IMR-90 (cell line): ENCODE measurements at regions of chrX and their contacts with region 1.

Region 1: DNA sequence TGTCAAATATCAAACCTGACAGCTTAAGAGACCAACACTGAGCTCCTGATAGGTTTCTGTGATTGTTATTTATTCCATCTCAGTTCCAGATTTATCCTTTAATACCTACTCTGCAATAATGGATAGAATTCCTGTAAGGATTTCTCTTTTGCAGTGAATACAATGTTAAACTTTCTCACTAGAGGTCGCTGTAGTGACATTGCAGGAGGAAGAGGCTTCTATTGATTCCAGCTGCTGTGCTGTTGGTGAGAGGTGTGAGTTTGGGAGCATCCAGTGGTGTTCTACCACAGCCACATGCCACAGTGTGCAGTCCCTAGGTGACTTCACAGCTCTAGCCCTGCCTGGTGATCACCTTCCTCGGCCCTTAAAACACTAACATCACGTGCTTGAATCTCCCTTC is 34.6 kb upstream of the DCAF8L2 start:
- DNase-seq: peak; percentile 40
- ATAC-seq: peak; percentile 63
- H3K4me3 ChIP-seq: no peak overlapping the region
- H3K27ac ChIP-seq: no peak overlapping the region
- H3K4me1 ChIP-seq: no peaks in the 10 kb centered on the region
- H3K27me3 ChIP-seq: no peaks in the 10 kb centered on the region
- CTCF ChIP-seq: peak; percentile 45
- POLR2A ChIP-seq: no peak
- RAD21 ChIP-seq: peak; percentile 62

Region 2: GRCh38 chrX:26999634-27000033 is 555.9 kb before region 1 on chrX:
- CTCF ChIA-PET with region 1: no interaction called
- POLR2A ChIA-PET with region 1: no interaction called
- dilution Hi-C with region 1: no loop called
- in situ Hi-C with region 1: no loop called
- intact Hi-C with region 1: no loop called
- DNase-seq: no peak
- ATAC-seq: no peak
- H3K4me3 ChIP-seq: no peak overlapping the region
- H3K27ac ChIP-seq: no peak overlapping the region
- H3K4me1 ChIP-seq: no peaks in the 10 kb centered on the region
- H3K27me3 ChIP-seq: no peaks in the 10 kb centered on the region
- CTCF ChIP-seq: no peak
- POLR2A ChIP-seq: no peak
- RAD21 ChIP-seq: no peak

Region 3: DNA sequence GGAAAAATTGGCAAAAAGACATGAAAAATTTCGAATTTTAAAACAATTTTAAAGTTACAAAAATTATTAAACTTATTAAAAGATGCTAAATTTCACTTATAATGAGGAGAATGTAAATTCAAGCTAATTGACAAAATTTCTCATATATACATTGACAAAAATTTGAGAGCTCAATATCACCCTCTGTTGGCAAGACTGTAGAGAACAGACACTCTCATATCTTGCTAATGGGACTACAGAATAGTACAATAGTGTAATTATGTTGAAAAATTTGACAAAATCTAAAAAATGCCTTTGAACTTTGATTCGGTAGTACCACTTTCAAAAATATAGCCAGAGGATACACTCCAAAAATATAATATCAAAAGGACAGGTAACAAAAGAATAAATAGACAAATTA is 64.5 kb after region 1 on chrX:
- CTCF ChIA-PET with region 1: no interaction called
- POLR2A ChIA-PET with region 1: no interaction called
- dilution Hi-C with region 1: no loop called
- in situ Hi-C with region 1: no loop called
- intact Hi-C with region 1: loop called (anchors 5 kb)
- DNase-seq: peak; percentile 8
- ATAC-seq: peak; percentile 51; the same call in 1 of the 2 replicates
- H3K4me3 ChIP-seq: no peak overlapping the region
- H3K27ac ChIP-seq: no peak overlapping the region
- H3K4me1 ChIP-seq: no peaks in the 10 kb centered on the region
- H3K27me3 ChIP-seq: no peaks in the 10 kb centered on the region
- CTCF ChIP-seq: peak; percentile 42
- POLR2A ChIP-seq: no peak
- RAD21 ChIP-seq: peak; percentile 17; the same call in 1 of the 2 replicates

Region 4: DNA sequence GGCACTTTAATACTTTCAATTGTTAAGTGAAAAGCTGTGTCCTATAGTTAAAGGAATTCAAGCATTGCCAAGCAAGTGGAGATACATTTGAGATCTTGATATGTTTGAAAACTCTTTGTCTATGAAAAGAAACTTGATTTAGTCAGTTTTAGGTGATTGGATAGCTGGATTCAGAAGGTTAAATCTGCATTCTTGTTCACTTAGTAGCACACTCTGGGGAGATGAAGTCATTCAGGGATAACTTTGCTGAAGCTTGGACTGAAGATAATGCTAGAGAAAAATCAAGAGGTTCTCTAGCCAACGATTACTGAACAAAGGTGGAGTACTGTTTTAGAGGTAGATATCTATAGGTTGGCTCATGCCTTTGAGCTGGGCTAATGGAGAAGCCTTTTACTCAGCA is 125.2 kb after region 1 on chrX:
- CTCF ChIA-PET with region 1: no interaction called
- POLR2A ChIA-PET with region 1: no interaction called
- dilution Hi-C with region 1: no loop called
- in situ Hi-C with region 1: no loop called
- intact Hi-C with region 1: loop called (anchors 5 kb)
- DNase-seq: peak; percentile 56
- ATAC-seq: peak; percentile 85
- H3K4me3 ChIP-seq: no peak overlapping the region
- H3K27ac ChIP-seq: no peak overlapping the region
- H3K4me1 ChIP-seq: no peaks in the 10 kb centered on the region
- H3K27me3 ChIP-seq: no peaks in the 10 kb centered on the region
- CTCF ChIP-seq: no peak
- POLR2A ChIP-seq: no peak
- RAD21 ChIP-seq: no peak